SK-N-SH (cell line): ENCODE measurements at regions of chr11 and their contacts with region 1.

Region 1: GRCh38 chr11:72609045-72609444 is 65.2 kb downstream of the PDE2A start:
- DNase-seq: no peak
- H3K4me3 ChIP-seq: no peak overlapping the region
- H3K27ac ChIP-seq: no peak overlapping the region
- H3K4me1 ChIP-seq: peaks cover 0 to 12% of the 10 kb centered on the region in 2 experiments; a peak in 1 of 4 replicates
- H3K27me3 ChIP-seq: peaks cover 8% of the 10 kb centered on the region; the same call in 1 of the 2 replicates
- CTCF ChIP-seq: peak; percentile 64
- EP300 ChIP-seq: no peak
- RAD21 ChIP-seq: peak; percentile 38

Region 2: GRCh38 chr11:72418834-72419562 is 190.0 kb before region 1 on chr11:
- CTCF ChIA-PET with region 1: no interaction called
- POLR2A ChIA-PET with region 1: no interaction called
- DNase-seq: no peak
- H3K4me3 ChIP-seq: no peak overlapping the region
- H3K27ac ChIP-seq: peak overlapping the region in 1 of 2 experiments; percentile 62; a peak in 2 of 4 replicates
- H3K4me1 ChIP-seq: peaks cover 7 to 23% of the 10 kb centered on the region in 2 experiments; a peak in 3 of 4 replicates
- H3K27me3 ChIP-seq: no peaks in the 10 kb centered on the region
- CTCF ChIP-seq: peak; percentile 16; the same call in 1 of the 2 replicates
- EP300 ChIP-seq: no peak
- RAD21 ChIP-seq: peak; percentile 40

Region 3: GRCh38 chr11:72585762-72586311 is 23.2 kb before region 1 on chr11:
- CTCF ChIA-PET with region 1: interaction called, 67 read pairs
- POLR2A ChIA-PET with region 1: no interaction called
- DNase-seq: peak; percentile 89
- H3K4me3 ChIP-seq: no peak overlapping the region
- H3K27ac ChIP-seq: no peak overlapping the region
- H3K4me1 ChIP-seq: no peaks in the 10 kb centered on the region; a peak in 1 of 4 replicates
- H3K27me3 ChIP-seq: peaks cover 20% of the 10 kb centered on the region
- CTCF ChIP-seq: peak; percentile 90
- EP300 ChIP-seq: no peak
- RAD21 ChIP-seq: peak; percentile 87

Region 4: DNA sequence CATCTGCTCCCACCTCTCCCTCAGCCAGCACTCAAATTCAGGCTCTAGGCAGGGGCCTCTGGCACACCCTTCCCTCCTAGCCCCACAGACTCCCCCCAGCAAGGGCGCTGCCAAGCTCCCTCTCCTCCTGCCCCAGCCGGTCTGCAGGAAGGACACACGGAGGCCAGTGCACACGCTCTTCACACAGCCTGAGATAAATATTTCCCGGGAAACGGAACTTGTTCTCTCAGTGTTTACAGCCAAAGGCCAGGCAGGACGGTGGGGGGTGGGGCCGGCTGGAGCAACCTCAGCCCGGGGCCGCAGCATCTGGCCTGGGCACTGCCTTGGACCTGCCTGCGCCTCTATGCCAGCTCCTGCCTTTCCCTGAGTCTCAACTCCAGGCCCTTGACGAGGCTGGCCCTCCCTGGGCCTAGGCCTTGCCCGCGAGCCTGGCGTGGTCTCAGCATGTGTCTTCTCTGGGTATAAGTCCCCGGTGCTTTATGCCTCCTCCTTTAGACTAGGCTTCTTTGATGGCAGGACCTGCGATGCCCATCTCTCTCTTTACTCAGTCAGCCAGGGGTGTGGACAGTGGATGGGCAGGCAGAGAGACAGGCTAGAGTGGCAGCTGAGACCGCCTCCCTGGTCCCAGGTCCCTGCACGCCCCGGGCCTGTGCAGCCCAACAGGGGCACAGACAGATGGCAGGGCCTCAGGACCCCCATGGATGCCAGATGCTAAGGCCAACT is 16.8 kb after region 1 on chr11:
- CTCF ChIA-PET with region 1: interaction called, 13 read pairs
- POLR2A ChIA-PET with region 1: interaction called, 3 read pairs
- DNase-seq: peak; percentile 84
- H3K4me3 ChIP-seq: no peak overlapping the region
- H3K27ac ChIP-seq: peak overlapping the region in 1 of 2 experiments; percentile 85; a peak in 2 of 4 replicates
- H3K4me1 ChIP-seq: peaks cover 0 to 69% of the 10 kb centered on the region in 2 experiments; a peak in 2 of 4 replicates
- H3K27me3 ChIP-seq: peaks cover 12% of the 10 kb centered on the region; the same call in 1 of the 2 replicates
- CTCF ChIP-seq: no peak
- EP300 ChIP-seq: peak in 1 of 2 experiments; percentile 42; a peak in 1 of 4 replicates
- RAD21 ChIP-seq: no peak

Region 5: GRCh38 chr11:72631806-72632731 is 23.0 kb after region 1 on chr11:
- CTCF ChIA-PET with region 1: interaction called, 13 read pairs
- POLR2A ChIA-PET with region 1: interaction called, 3 read pairs
- DNase-seq: peak; percentile 80
- H3K4me3 ChIP-seq: no peak overlapping the region
- H3K27ac ChIP-seq: peak overlapping the region in 1 of 2 experiments; percentile 88; a peak in 2 of 4 replicates
- H3K4me1 ChIP-seq: peaks cover 0 to 94% of the 10 kb centered on the region in 2 experiments; a peak in 2 of 4 replicates
- H3K27me3 ChIP-seq: no peaks in the 10 kb centered on the region; the same call in 1 of the 2 replicates
- CTCF ChIP-seq: no peak
- EP300 ChIP-seq: peak in 1 of 2 experiments; percentile 56; a peak in 1 of 4 replicates
- RAD21 ChIP-seq: peak; percentile 3; the same call in 1 of the 2 replicates